A673 (cell line): ENCODE measurements at regions of chr2 and their contacts with region 1.

Region 1: GRCh38 chr2:73975731-73976130 is 9.0 kb upstream of the TET3 start:
- DNase-seq: no peak
- H3K4me3 ChIP-seq: no peak overlapping the region
- H3K27ac ChIP-seq: no peak overlapping the region
- H3K4me1 ChIP-seq: peaks cover 5% of the 10 kb centered on the region
- H3K27me3 ChIP-seq: no peaks in the 10 kb centered on the region
- CTCF ChIP-seq: no peak

Region 2: DNA sequence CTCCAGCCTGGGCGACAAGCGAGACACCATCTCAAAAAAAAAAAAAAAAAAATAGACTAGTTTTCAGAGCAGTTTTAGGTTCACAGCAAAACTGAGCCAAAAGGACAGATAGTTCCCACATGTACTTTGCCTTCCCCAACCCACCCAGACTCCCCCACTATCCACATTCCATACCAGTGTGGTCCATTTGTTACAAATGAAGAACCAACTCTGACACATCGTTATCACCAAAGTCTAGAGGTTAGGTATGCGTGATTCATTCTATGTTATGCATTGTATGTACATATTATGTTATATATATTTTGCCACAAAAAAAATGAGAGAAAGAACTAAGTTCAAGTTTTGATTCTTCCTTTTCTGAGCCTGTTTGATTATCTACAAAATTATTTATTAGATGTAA is 199.3 kb before region 1 on chr2:
- CTCF ChIA-PET with region 1: no interaction called
- POLR2A ChIA-PET with region 1: interaction called, 23 read pairs
- intact Hi-C with region 1: no loop called
- DNase-seq: no peak
- H3K4me3 ChIP-seq: no peak overlapping the region
- H3K27ac ChIP-seq: no peak overlapping the region
- H3K4me1 ChIP-seq: no peaks in the 10 kb centered on the region
- H3K27me3 ChIP-seq: no peaks in the 10 kb centered on the region
- CTCF ChIP-seq: no peak

Region 3: DNA sequence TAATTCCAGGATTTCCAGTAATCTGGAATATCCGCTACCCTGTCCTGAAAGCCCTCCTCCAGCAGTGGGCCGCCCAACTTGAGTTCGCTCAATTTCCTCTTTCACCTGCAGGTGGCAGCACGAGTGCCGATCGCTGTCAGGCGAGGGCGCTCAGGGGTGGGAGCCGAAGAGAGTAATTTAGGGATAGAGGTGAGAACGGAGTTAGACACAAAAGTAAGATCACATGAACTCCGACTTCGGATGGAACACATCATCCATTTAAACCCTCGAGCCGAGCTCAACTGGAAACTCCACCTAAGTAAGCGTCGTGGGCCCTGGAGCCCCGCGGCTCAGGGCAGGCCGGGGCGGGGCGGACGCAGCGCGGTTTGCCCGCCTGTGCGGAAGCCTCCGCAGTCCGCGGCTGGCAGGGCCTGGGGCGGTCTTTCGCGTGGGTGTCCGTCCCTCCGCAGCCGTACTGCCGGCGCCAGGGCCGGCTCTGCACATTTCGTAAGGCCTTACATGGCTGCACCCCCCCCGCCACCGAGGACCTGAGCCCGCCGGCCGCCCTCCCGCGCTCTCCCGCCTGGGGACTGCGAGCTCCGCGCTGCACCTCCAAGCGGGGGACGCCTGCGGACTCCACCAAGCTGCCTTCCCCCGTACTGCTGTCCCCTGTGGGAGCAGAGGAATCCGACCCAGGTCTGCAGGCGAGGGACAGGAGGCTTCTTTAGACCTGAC is 739.5 kb after region 1 on chr2:
- CTCF ChIA-PET with region 1: no interaction called
- POLR2A ChIA-PET with region 1: no interaction called
- intact Hi-C with region 1: no loop called
- DNase-seq: peak; percentile 84
- H3K4me3 ChIP-seq: peak overlapping the region; percentile 48
- H3K27ac ChIP-seq: no peak overlapping the region
- H3K4me1 ChIP-seq: peaks cover 3% of the 10 kb centered on the region
- H3K27me3 ChIP-seq: peaks cover 28% of the 10 kb centered on the region
- CTCF ChIP-seq: peak; percentile 95